ENCODE measurements at regions of chr13 and their contacts with region 1.

Region 1: GRCh38 chr13:49840266-49840665 is 47.8 kb upstream of the KPNA3 start:
- DNase-seq: no peak
- ATAC-seq: peak in 1 of 2 donors; percentile 63
- H3K4me3 ChIP-seq: no peak overlapping the region
- H3K27ac ChIP-seq: no peak overlapping the region
- H3K4me1 ChIP-seq: no peaks in the 10 kb centered on the region
- H3K27me3 ChIP-seq: no peaks in the 10 kb centered on the region

Region 2: GRCh38 chr13:49652355-49653305 is 187.6 kb before region 1 on chr13:
- intact Hi-C with region 1: loop called in 2 of 4 experiments (anchors 5 to 10 kb)
- DNase-seq: peak in 1 of 3 donors; percentile 52
- ATAC-seq: peak; percentile 15 to 71
- H3K4me3 ChIP-seq: no peak overlapping the region
- H3K27ac ChIP-seq: no peak overlapping the region
- H3K4me1 ChIP-seq: no peaks in the 10 kb centered on the region
- H3K27me3 ChIP-seq: no peaks in the 10 kb centered on the region

Region 3: DNA sequence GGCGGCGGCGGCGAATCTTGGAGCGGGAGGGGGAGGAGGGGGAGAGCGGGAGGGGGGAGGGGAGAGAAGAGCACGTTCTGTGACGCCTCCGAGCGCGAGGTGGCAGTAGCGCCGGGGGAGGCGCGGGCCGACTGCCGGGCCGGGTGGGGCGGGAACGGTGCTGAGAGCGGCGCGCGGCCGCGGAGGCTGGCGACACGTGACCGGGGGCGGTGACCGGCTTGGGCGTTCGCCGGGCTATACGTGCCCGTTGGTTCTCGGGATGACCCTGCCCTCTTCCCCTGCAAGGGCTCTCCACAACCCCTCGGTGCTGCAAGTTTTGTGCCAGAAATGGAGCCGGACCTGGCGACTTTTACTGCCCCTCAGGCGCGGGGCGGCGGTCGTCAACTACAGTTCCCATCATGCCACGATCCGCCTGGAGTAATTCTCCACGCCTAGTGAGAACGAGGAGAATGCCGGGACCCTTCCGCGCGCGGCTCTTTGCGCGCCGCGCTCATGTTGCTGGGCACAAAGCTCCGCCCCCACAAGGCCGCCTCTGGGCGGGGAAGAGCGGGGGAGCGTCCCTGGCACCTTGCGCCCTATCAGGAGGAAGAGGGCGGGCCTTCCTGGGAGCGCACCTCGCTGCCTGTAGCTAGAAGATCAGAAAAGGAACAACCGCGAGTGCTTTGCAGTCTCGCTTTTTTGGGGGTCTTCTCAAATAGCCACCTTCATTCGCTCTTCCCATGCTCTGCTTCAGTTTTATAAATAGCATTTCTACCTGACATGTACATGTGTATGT is 47.5 kb before region 1 on chr13 and contains the start of gene KPNA3:
- intact Hi-C with region 1: loop called in 1 of 4 experiments (anchors 10 kb)
- DNase-seq: peak; percentile 97 to 99 (median 99)
- ATAC-seq: peak; percentile 98
- H3K4me3 ChIP-seq: peak within 1 kb of the TSS; percentile 80
- H3K27ac ChIP-seq: peak within 1 kb of the TSS; percentile 98
- H3K4me1 ChIP-seq: no peaks in the 10 kb centered on the region
- H3K27me3 ChIP-seq: no peaks in the 10 kb centered on the region
- total RNA-seq, gene KPNA3: 45.5 to 59.1 (median 56.5) TPM

Region 4: DNA sequence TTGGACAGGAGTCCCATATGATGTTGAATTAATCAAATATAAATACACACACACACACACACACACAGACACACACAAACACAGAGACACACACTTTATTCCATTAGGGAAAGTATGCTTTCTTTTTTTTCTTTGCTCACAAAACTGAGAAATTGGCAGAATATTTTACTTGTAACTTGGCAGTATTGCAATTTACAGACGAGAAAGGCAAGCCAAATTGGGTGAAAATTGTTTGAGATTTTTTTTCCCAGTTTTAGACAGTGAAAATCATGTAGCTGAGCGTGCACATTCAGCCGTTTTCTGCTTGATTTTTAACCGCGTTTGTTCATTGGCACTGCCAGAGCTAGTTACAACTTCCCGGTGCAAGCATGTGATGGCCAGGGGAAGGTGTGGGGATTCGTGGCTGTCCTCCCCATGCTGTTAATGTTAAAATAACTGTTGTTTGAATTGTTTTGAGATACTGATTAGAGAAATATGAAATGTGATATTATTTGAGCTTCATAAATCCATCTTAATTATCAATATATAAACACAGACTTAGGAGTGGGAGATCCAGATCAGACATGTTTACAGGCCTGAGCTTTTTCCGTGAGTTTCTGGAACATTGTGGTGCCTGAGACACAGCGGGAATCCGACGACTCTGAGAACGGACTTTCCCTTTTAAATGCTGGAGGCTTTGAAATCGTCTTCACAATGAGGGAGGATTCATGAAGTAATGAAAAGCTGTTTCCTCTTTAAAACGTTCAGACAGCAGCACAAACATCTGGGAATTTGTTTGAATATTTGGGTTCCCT is 300.5 kb after region 1 on chr13:
- intact Hi-C with region 1: no loop called
- DNase-seq: no peak
- ATAC-seq: no peak
- H3K4me3 ChIP-seq: no peak overlapping the region
- H3K27ac ChIP-seq: no peak overlapping the region
- H3K4me1 ChIP-seq: no peaks in the 10 kb centered on the region
- H3K27me3 ChIP-seq: no peaks in the 10 kb centered on the region